ENCODE measurements at regions of chr20 and their contacts with region 1.

Region 1: GRCh38 chr20:43448748-43449535 is 8.8 kb upstream of the SRSF6 start:
- DNase-seq: peak; percentile 70
- ATAC-seq: peak; percentile 74
- H3K4me3 ChIP-seq: peak overlapping the region; percentile 7 to 49 (median 8); a peak in 3 of 6 replicates
- H3K27ac ChIP-seq: no peak overlapping the region
- H3K4me1 ChIP-seq: peaks cover 65% of the 10 kb centered on the region
- H3K27me3 ChIP-seq: 0 out of 5 replicates have a peak, but pooled peaks cover 0 to 6% of the 10 kb centered on the region in 2 experiments
- CTCF ChIP-seq: peak; percentile 96
- EP300 ChIP-seq: no peak
- POLR2A ChIP-seq: no peak
- RAD21 ChIP-seq: peak; percentile 91

Region 2: GRCh38 chr20:43537921-43538877 is 89.3 kb after region 1 on chr20:
- CTCF ChIA-PET with region 1: interaction called, 4 read pairs
- POLR2A ChIA-PET with region 1: no interaction called
- in situ Hi-C with region 1: no loop called
- intact Hi-C with region 1: loop called (anchors 1 kb)
- DNase-seq: peak; percentile 74
- ATAC-seq: peak; percentile 67
- H3K4me3 ChIP-seq: no peak overlapping the region
- H3K27ac ChIP-seq: no peak overlapping the region
- H3K4me1 ChIP-seq: peaks cover 45% of the 10 kb centered on the region
- H3K27me3 ChIP-seq: no peaks in the 10 kb centered on the region; a peak in 1 of 5 replicates
- CTCF ChIP-seq: peak; percentile 99
- EP300 ChIP-seq: no peak
- POLR2A ChIP-seq: no peak
- RAD21 ChIP-seq: peak; percentile 97

Region 3: GRCh38 chr20:43691928-43692524 is 243.1 kb after region 1 on chr20:
- CTCF ChIA-PET with region 1: interaction called, 55 read pairs
- POLR2A ChIA-PET with region 1: no interaction called
- in situ Hi-C with region 1: loop called (anchors 5 kb)
- intact Hi-C with region 1: loop called (anchors 1 kb)
- DNase-seq: peak; percentile 72
- ATAC-seq: peak; percentile 92
- H3K4me3 ChIP-seq: no peak overlapping the region
- H3K27ac ChIP-seq: no peak overlapping the region
- H3K4me1 ChIP-seq: no peaks in the 10 kb centered on the region
- H3K27me3 ChIP-seq: no peaks in the 10 kb centered on the region
- CTCF ChIP-seq: peak; percentile 93
- EP300 ChIP-seq: no peak
- POLR2A ChIP-seq: no peak
- RAD21 ChIP-seq: peak; percentile 93

Region 4: GRCh38 chr20:43749734-43750294 is 300.9 kb after region 1 on chr20:
- CTCF ChIA-PET with region 1: no interaction called
- POLR2A ChIA-PET with region 1: no interaction called
- in situ Hi-C with region 1: no loop called
- intact Hi-C with region 1: loop called (anchors 5 kb)
- DNase-seq: peak; percentile 48
- ATAC-seq: peak; percentile 94
- H3K4me3 ChIP-seq: no peak overlapping the region
- H3K27ac ChIP-seq: no peak overlapping the region
- H3K4me1 ChIP-seq: no peaks in the 10 kb centered on the region
- H3K27me3 ChIP-seq: peaks cover 3 to 60% of the 10 kb centered on the region in 2 experiments; a peak in 3 of 5 replicates
- CTCF ChIP-seq: peak; percentile 99
- EP300 ChIP-seq: no peak
- POLR2A ChIP-seq: no peak
- RAD21 ChIP-seq: peak; percentile 98

Region 5: GRCh38 chr20:43840382-43841070 is 391.6 kb after region 1 on chr20:
- CTCF ChIA-PET with region 1: no interaction called
- POLR2A ChIA-PET with region 1: no interaction called
- in situ Hi-C with region 1: no loop called
- intact Hi-C with region 1: loop called (anchors 2 kb)
- DNase-seq: peak; percentile 39
- ATAC-seq: peak; percentile 79
- H3K4me3 ChIP-seq: no peak overlapping the region
- H3K27ac ChIP-seq: no peak overlapping the region
- H3K4me1 ChIP-seq: no peaks in the 10 kb centered on the region
- H3K27me3 ChIP-seq: peaks cover 2 to 18% of the 10 kb centered on the region in 2 experiments; a peak in 2 of 5 replicates
- CTCF ChIP-seq: peak; percentile 55
- EP300 ChIP-seq: no peak
- POLR2A ChIP-seq: no peak
- RAD21 ChIP-seq: no peak

Region 6: GRCh38 chr20:44080646-44081267 is 631.8 kb after region 1 on chr20:
- CTCF ChIA-PET with region 1: interaction called, 18 read pairs
- POLR2A ChIA-PET with region 1: no interaction called
- in situ Hi-C with region 1: loop called (anchors 5 kb)
- intact Hi-C with region 1: no loop called
- DNase-seq: peak; percentile 79
- ATAC-seq: peak; percentile 93
- H3K4me3 ChIP-seq: no peak overlapping the region
- H3K27ac ChIP-seq: no peak overlapping the region
- H3K4me1 ChIP-seq: no peaks in the 10 kb centered on the region
- H3K27me3 ChIP-seq: peaks cover 3 to 51% of the 10 kb centered on the region in 2 experiments; a peak in 4 of 5 replicates
- CTCF ChIP-seq: peak; percentile 99
- EP300 ChIP-seq: no peak
- POLR2A ChIP-seq: no peak
- RAD21 ChIP-seq: peak; percentile 95